HAP-1 (cell line): ENCODE measurements at regions of chrX and their contacts with region 1.

Region 1: GRCh38 chrX:116204932-116205331 is 34.4 kb downstream of the AGTR2 start:
- DNase-seq: peak; percentile 12 to 32
- H3K4me3 ChIP-seq: no peak overlapping the region
- H3K4me1 ChIP-seq: no peaks in the 10 kb centered on the region
- H3K27me3 ChIP-seq: no peaks in the 10 kb centered on the region

Region 2: DNA sequence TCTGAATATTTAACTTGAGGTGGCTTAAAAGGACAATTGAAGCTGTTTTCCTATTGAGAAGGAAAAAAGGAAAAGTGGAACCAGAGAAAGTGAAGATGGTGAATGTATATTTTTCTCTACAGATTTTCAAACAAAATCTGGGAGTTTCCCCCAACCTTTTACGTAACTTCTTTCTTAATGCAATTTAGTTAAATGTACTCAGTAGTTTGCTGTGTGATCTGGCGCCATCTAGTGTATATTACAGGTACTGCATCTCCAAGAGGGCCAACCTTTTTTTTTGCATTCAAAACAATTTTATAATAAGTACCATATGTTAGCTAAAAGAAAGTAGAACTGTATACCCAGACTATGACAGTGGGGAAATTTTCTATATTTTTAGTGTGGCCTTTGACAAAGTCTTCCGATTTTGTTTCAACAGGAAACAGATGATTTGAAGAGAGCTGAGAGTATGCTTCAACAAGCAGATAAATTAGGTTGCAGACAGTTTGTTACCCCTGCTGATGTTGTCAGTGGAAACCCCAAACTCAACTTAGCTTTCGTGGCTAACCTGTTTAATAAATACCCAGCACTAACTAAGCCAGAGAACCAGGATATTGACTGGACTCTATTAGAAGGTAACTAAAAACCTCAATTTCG is 561.9 kb before region 1 on chrX:
- in situ Hi-C with region 1: no loop called
- DNase-seq: peak; percentile 45 to 69
- H3K4me3 ChIP-seq: no peak overlapping the region
- H3K4me1 ChIP-seq: peaks cover 27% of the 10 kb centered on the region
- H3K27me3 ChIP-seq: no peaks in the 10 kb centered on the region

Region 3: DNA sequence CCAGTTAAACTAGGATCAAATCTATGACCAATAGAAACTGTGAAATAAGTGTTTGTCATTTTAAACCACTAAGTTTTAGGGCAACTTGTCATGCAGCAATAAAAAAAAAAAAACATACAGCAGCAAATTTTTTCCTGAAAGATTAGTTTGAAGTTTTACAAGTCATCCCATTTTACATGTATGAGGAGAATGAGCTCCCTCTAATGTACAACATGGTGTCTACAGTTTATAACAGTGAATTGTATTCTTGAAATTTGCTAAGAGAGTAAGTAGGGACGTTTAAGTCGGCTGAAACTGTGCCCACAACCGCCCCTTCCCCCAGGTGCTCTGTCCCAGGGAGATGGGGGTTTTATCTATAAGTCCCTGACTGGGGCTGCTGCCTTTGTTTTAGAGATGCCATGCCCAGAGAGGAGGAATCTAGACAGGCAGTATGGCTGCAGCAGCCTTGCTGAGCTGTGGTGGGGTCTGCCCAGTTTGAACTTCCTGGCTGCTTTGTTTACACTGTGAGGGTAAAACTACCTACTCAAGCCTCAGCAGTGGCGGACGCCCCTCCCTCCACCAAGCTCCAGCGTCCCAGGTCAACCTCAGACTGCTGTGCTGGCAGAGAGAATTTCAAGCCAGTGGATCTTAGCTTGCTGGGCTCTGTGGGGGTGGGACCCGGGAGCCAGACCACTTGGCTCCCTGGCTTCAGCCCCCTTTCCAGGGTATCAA is 757.1 kb after region 1 on chrX:
- in situ Hi-C with region 1: loop called (anchors 25 kb)
- DNase-seq: peak in 1 of 2 experiments; percentile 44
- H3K4me3 ChIP-seq: no peak overlapping the region
- H3K4me1 ChIP-seq: no peaks in the 10 kb centered on the region
- H3K27me3 ChIP-seq: no peaks in the 10 kb centered on the region